Activated B cell treated with CpG ODN at 0.5 μM for 24 hours (primary cell): ENCODE measurements at regions of chr21 and their contacts with region 1.

Region 1: GRCh38 chr21:43297391-43297981 is 128.7 kb downstream of the CRYAA start:
- DNase-seq: no peak
- ATAC-seq: no peak
- H3K4me3 Mint-ChIP-seq: no peak overlapping the region
- H3K27ac Mint-ChIP-seq: no peak overlapping the region
- H3K4me1 Mint-ChIP-seq: peaks cover 37% of the 10 kb centered on the region
- H3K27me3 Mint-ChIP-seq: peaks cover 20% of the 10 kb centered on the region
- CTCF ChIP-seq: no peak

Region 2: GRCh38 chr21:42556960-42557359 is 740.5 kb before region 1 on chr21:
- CTCF ChIA-PET with region 1: no interaction called
- POLR2A ChIA-PET with region 1: no interaction called
- intact Hi-C with region 1: no loop called
- DNase-seq: peak; percentile 21
- ATAC-seq: peak; percentile 76
- H3K4me3 Mint-ChIP-seq: peak overlapping the region; percentile 35
- H3K27ac Mint-ChIP-seq: peak overlapping the region; percentile 50
- H3K4me1 Mint-ChIP-seq: peaks cover 16% of the 10 kb centered on the region
- H3K27me3 Mint-ChIP-seq: no peaks in the 10 kb centered on the region
- CTCF ChIP-seq: no peak

Region 3: GRCh38 chr21:43318841-43319781 is 21.6 kb after region 1 on chr21:
- CTCF ChIA-PET with region 1: no interaction called
- POLR2A ChIA-PET with region 1: no interaction called
- intact Hi-C with region 1: loop called (anchors 2 kb)
- DNase-seq: no peak
- ATAC-seq: peak; percentile 80
- H3K4me3 Mint-ChIP-seq: peak overlapping the region; percentile 32
- H3K27ac Mint-ChIP-seq: no peak overlapping the region
- H3K4me1 Mint-ChIP-seq: peaks cover 25% of the 10 kb centered on the region
- H3K27me3 Mint-ChIP-seq: peaks cover 5% of the 10 kb centered on the region
- CTCF ChIP-seq: no peak

Region 4: DNA sequence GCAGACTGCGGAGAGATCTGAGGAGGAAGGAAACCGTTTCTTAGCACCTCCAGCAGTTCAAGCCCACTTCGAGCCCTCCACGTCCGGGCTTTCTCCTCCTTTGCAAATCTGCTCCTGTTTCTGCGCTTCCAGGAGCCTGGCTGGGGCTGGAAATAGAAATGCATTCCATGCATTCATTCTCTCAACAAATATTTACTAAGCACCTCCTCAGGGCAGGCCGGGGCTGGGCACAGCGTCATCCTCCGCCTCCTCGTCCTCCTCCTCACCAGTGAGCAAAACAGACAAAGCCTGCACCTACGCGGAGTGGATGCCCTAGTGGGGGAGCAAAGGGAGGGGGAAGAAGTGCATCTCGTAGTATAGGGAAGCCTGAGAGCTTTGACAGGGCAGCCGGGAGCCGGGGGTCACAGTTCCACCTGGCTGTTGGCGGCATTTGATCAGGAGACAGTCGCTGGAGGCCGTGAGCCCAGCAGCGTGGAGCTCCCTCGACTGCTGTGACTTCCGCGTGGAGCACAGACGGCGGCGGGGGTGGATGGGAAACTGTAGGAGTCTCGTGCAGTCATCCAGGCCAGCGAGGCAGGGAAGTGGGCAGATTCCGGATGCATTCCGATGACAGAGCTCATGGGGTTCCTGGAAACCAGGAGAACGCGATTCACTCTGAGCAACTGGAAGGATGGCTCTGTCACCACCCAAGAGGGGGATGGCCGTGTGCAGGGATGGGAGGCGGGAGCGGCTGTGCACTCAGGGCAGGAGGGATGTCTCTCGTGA is 36.0 kb after region 1 on chr21:
- CTCF ChIA-PET with region 1: no interaction called
- POLR2A ChIA-PET with region 1: no interaction called
- intact Hi-C with region 1: no loop called
- DNase-seq: no peak
- ATAC-seq: no peak
- H3K4me3 Mint-ChIP-seq: no peak overlapping the region
- H3K27ac Mint-ChIP-seq: no peak overlapping the region
- H3K4me1 Mint-ChIP-seq: peaks cover 19% of the 10 kb centered on the region
- H3K27me3 Mint-ChIP-seq: no peaks in the 10 kb centered on the region
- CTCF ChIP-seq: no peak